Right cardiac atrium (tissue), 5 donors: ENCODE measurements at regions of chr3 and their contacts with region 1.

Region 1: GRCh38 chr3:127831723-127832172 is 9.4 kb upstream of the MGLL start:
- DNase-seq: peak; percentile 45 to 70 (median 68)
- ATAC-seq: peak; percentile 44 to 55
- H3K4me3 ChIP-seq: no peak overlapping the region
- H3K27ac ChIP-seq: no peak overlapping the region
- H3K4me1 ChIP-seq: no peaks in the 10 kb centered on the region
- H3K27me3 ChIP-seq: no peaks in the 10 kb centered on the region

Region 2: GRCh38 chr3:127639173-127640030 is 192.3 kb before region 1 on chr3:
- intact Hi-C with region 1: loop called in 1 of 4 experiments (anchors 5 kb)
- DNase-seq: no peak
- ATAC-seq: peak in 1 of 2 donors; percentile 48
- H3K4me3 ChIP-seq: no peak overlapping the region
- H3K27ac ChIP-seq: no peak overlapping the region
- H3K4me1 ChIP-seq: no peaks in the 10 kb centered on the region
- H3K27me3 ChIP-seq: no peaks in the 10 kb centered on the region

Region 3: DNA sequence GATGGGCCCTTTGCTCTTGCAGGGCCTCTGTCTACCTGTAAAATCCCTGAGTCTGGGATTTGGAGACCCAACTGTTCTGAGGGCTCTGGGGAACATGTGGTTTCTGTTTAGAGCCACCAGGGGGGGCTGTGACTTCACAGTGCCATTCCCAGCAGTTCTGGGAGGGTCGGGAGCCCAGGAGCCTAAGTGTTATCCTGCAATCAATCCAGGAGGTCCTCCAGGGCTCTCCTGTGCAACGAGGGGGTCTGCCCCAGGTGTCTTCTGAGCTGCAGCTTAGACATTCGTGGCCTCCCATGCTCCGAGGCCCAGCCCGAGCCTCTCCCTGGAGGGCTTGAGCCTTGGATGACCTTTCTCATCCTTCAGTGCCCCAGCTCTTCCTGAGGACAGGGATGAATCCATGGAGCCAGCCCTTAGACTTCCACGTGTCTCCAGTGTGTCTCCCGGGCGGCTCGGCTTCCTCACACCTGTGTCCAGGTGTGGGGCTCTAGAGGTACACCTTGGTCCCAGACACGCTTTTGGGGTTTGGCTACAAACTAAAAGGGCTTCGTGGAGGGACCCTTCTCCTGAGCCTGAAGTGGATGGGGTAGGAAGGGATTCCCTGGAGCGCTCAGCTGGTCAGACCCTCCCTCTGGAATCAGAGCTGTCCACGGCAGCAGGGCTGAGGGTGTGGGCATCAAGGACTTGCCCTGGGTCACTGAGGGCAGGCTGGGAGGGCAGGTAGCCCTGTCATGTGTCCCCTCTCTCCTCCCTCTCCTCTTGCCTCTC is 179.3 kb before region 1 on chr3:
- intact Hi-C with region 1: loop called in 2 of 4 experiments (anchors 5 kb)
- DNase-seq: peak in 2 of 3 donors; percentile 75 to 79
- ATAC-seq: peak; percentile 84 to 88
- H3K4me3 ChIP-seq: no peak overlapping the region
- H3K27ac ChIP-seq: no peak overlapping the region
- H3K4me1 ChIP-seq: no peaks in the 10 kb centered on the region
- H3K27me3 ChIP-seq: no peaks in the 10 kb centered on the region

Region 4: DNA sequence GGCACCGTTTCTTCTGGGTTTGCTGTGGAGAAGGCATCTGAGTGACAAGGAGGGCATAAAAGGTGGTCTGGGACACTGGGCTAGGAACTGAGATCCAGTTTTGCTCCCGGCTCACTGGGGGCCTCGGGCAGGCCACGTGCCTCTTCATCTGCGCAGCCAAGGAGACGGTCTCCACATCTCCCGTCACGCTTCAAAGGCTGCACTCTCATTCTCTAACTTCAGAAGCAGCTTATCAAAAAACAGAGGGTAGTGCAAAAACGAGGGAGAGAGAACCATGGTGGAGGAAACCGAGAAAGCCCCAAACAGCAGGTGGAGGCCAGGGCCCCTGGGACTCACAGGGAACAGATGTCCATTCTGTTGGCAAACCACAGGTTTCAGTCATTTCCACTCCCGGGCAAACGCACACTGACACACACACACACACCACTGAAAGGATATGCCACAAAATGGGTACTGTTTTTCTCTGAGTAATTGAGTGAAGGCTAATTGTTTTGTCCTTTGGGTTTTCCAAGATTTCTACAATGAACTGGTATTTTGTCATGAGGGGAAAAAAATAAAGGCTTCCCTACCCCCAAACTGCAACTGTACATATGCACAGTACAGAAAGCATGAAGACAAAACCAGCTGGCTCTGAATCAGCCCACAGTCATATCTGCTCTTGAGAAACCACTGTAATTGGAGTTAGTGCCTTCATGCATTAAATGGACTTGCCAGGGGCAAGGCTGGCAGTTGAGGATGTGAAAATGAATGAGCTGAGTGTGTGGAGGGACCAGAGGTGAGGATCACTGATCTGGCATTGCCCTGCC is 81.3 kb before region 1 on chr3:
- intact Hi-C with region 1: no loop called
- DNase-seq: no peak
- ATAC-seq: no peak
- H3K4me3 ChIP-seq: no peak overlapping the region
- H3K27ac ChIP-seq: no peak overlapping the region
- H3K4me1 ChIP-seq: peaks cover 28% of the 10 kb centered on the region
- H3K27me3 ChIP-seq: no peaks in the 10 kb centered on the region

Region 5: GRCh38 chr3:127791211-127791946 is 40.4 kb before region 1 on chr3:
- intact Hi-C with region 1: no loop called
- DNase-seq: no peak
- ATAC-seq: no peak
- H3K4me3 ChIP-seq: no peak overlapping the region
- H3K27ac ChIP-seq: no peak overlapping the region
- H3K4me1 ChIP-seq: peaks cover 26% of the 10 kb centered on the region
- H3K27me3 ChIP-seq: no peaks in the 10 kb centered on the region